HepG2 (cell line): ENCODE measurements at regions of chr5 and their contacts with region 1.

Region 1: GRCh38 chr5:88634014-88634413 is 249.0 kb downstream of the MEF2C start:
- DNase-seq: no peak
- ATAC-seq: no peak
- H3K4me3 ChIP-seq: no peak overlapping the region
- H3K27ac ChIP-seq: no peak overlapping the region
- H3K4me1 ChIP-seq: no peaks in the 10 kb centered on the region
- H3K27me3 ChIP-seq: no peaks in the 10 kb centered on the region
- CTCF ChIP-seq: no peak
- EP300 ChIP-seq: no peak
- POLR2A ChIP-seq: no peak
- RAD21 ChIP-seq: no peak

Region 2: DNA sequence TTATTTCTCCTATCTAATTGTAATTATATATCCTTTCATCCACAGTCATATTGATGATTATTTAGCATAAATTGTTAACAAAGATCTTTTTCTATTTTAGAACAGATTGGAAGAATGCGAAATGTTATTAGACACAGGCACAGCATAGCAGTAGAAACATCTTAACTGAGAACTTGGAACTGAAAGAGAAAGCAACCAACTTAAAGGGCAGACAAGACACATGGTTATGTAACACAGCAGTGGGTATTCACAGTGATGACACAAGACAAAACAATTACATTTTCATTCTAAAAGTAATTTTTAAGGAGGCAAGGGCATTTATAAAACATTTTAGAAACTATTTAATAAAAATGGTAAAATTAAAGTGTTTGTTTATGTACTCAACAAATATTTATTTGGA is 306.7 kb after region 1 on chr5:
- CTCF ChIA-PET with region 1: no interaction called
- POLR2A ChIA-PET with region 1: no interaction called
- in situ Hi-C with region 1: no loop called
- intact Hi-C with region 1: loop called (anchors 5 kb)
- DNase-seq: no peak
- ATAC-seq: no peak
- H3K4me3 ChIP-seq: no peak overlapping the region
- H3K27ac ChIP-seq: no peak overlapping the region
- H3K4me1 ChIP-seq: no peaks in the 10 kb centered on the region
- H3K27me3 ChIP-seq: no peaks in the 10 kb centered on the region
- CTCF ChIP-seq: no peak
- EP300 ChIP-seq: no peak
- POLR2A ChIP-seq: no peak
- RAD21 ChIP-seq: no peak